RWPE1 (cell line): ENCODE measurements at regions of chr6 and their contacts with region 1.

Region 1: DNA sequence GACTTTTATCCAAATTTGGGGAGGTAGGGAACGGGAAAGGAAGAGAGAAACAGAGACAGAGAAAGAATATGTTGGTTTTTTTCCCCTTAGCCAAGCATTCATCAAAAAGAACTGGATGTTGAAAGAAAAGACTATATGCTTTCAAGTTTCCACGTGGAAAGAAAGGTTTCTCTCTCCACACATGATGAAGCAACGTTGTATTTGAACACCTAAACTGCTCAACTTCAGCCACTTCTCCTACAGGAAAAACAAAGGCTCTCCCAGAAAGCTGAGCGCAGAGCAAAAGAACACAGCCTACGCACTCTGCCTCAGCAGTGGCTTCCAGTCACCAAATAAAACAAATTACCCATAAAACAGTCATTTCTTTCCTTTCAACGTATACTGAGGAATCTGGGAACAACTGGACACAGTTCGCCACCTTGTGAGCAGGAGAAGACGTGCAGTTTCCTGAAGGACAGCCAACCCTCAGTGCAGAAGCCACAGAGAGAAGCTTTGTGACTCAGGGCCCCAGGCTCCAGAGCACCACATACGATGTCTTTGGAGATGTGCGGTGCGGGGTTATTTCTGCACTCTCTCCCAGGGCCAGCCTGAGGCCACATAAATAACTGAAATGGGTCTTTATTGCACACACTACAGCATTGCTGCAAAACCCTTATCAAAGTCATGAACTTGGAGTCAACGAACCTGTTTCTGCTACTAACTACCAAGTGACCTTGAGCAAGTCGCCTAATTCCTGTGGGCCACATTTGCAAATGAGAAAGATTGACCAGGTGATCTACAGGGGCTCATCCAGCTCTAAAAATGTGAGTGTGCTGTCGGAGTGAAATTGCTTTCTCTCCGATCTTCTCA is 10.1 kb downstream of the IL17F start:
- DNase-seq: peak; percentile 71
- H3K27ac ChIP-seq: no peak overlapping the region
- CTCF ChIP-seq: peak; percentile 49

Region 2: DNA sequence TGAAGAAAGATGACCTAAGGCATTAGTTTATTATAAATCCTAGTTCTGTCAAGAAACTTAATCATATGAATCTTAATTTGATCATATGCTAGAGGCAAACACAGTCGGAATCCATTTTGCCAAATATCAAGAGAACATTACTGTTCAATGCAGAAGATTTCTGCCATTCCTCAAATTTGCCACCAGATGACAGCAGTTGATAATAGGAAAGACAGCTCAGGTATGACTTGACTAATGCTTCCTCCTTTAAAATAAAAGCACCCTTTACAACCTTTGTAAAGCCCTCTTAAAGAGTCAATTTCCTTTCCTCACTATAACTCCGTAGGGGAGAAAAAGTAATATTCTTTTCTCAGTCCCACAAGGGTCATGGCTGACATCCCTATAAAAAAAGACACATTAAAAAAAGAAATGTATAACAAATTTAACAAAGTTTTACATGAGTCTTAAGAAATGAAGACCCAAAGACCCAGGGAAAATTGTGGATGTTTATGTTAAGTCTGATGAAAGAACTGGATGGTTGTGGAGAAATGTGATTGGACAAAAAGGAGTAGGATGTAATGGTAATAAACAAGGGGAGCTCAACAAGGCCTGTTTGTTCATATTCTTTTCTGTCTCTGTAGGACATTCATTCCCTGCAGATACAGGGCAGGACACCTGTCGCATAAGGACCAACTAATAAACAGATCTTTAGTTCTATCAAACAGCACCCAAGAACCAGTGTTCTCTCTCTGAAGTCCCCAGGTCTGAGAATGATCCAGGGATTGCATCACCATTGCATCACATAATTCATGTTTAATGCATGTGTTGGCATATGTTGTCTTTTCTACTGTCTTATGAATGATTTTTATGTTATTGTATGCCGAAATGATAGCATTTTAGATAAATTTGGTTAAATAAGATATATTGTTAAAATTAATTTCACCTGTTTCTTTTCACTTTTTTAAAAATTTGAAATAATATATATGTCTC is 71.0 kb before region 1 on chr6:
- CTCF ChIA-PET with region 1: interaction called, 29 read pairs
- POLR2A ChIA-PET with region 1: no interaction called
- DNase-seq: peak; percentile 31
- H3K27ac ChIP-seq: no peak overlapping the region
- CTCF ChIP-seq: peak; percentile 82